ENCODE measurements at regions of chr10 and their contacts with region 1.

Region 1: GRCh38 chr10:7818295-7819122 is at the start of gene TAF3:
- DNase-seq: peak; percentile 99
- H3K4me3 Mint-ChIP-seq: peak within 1 kb of the TSS; percentile 97
- H3K27ac Mint-ChIP-seq: peak within 1 kb of the TSS; percentile 88
- H3K4me1 Mint-ChIP-seq: peaks cover 18% of the 10 kb centered on the region
- H3K27me3 Mint-ChIP-seq: peaks cover 19% of the 10 kb centered on the region
- total RNA-seq, gene TAF3: 15.1 and 15.9 TPM in 2 replicates

Region 2: GRCh38 chr10:7525314-7526016 is 293.0 kb before region 1 on chr10:
- intact Hi-C with region 1: loop called (anchors 2 kb)
- DNase-seq: peak; percentile 91
- H3K4me3 Mint-ChIP-seq: no peak overlapping the region
- H3K27ac Mint-ChIP-seq: no peak overlapping the region
- H3K4me1 Mint-ChIP-seq: peaks cover 20% of the 10 kb centered on the region
- H3K27me3 Mint-ChIP-seq: peaks cover 18% of the 10 kb centered on the region

Region 3: DNA sequence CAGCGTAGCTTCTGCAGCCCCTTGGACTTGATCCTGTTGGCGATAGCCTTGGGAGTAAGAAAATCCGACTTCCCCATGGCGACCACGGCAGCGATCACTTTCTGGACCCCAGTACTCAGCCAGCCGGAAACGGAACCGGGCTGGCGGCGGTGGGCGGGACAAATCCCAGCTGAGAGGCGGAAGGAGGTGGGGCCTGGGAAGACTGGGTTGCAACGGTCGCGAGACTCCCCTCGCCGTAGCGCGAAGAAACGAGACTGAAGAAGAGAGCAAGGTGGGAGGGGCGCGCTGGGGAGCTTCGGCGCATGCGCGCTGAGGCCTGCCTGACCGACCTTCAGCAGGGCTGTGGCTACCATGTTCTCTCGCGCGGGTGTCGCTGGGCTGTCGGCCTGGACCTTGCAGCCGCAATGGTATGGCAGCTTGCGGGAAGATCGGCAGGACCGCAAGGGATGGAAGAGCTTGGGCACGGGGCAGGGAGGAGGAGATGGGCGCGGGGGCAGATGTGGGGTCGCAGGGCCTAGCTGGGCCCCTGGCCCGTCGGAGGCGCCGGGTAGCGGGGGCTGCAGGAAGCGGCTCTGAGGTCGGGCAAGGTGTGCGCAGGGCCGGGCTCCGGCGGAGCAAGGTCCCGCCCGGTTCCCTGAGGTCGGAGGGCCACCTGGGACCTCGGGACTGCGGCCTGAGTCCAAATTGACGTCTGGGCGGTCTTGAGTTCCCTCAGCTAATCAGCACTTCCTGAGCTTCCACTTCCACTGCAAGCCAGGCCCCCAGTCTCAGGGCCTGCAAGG is 30.5 kb before region 1 on chr10 and contains the starts of genes ATP5F1C and KIN:
- intact Hi-C with region 1: loop called (anchors 1 kb)
- DNase-seq: peak; percentile 99
- H3K4me3 Mint-ChIP-seq: no peak within 1 kb of the TSS
- H3K27ac Mint-ChIP-seq: no peak within 1 kb of the TSS
- H3K4me1 Mint-ChIP-seq: peaks cover 34% of the 10 kb centered on the region
- H3K27me3 Mint-ChIP-seq: no peaks in the 10 kb centered on the region
- total RNA-seq, gene ATP5F1C: 332 and 369 TPM in 2 replicates
- total RNA-seq, gene KIN: 13.9 and 14.4 TPM in 2 replicates

Region 4: GRCh38 chr10:8424555-8425211 is 606.2 kb after region 1 on chr10:
- intact Hi-C with region 1: no loop called
- DNase-seq: no peak
- H3K4me3 Mint-ChIP-seq: no peak overlapping the region
- H3K27ac Mint-ChIP-seq: peak overlapping the region; percentile 35
- H3K4me1 Mint-ChIP-seq: peaks cover 14% of the 10 kb centered on the region
- H3K27me3 Mint-ChIP-seq: peaks cover 5% of the 10 kb centered on the region

Measured in activated CD4-positive, alpha-beta T cell treated with anti-CD3 and anti-CD28 coated beads, Interleukin-2, amount 10 ng/mL, durations not matched to agents 24 days and 14 days (primary cell).